MCF 10A (cell line): ENCODE measurements at regions of chr1 and their contacts with region 1.

Region 1: GRCh38 chr1:26035959-26036755 is 9.8 kb downstream of the SLC30A2 start:
- DNase-seq: peak; percentile 70
- H3K4me3 Mint-ChIP-seq: peak overlapping the region; percentile 94
- H3K27ac Mint-ChIP-seq: peak overlapping the region; percentile 61
- H3K4me1 Mint-ChIP-seq: peaks cover 11% of the 10 kb centered on the region
- H3K27me3 Mint-ChIP-seq: no peaks in the 10 kb centered on the region
- CTCF ChIP-seq: peak; percentile 96

Region 2: GRCh38 chr1:26097696-26098095 is 61.5 kb after region 1 on chr1:
- CTCF ChIA-PET with region 1: interaction called, 10 read pairs
- POLR2A ChIA-PET with region 1: no interaction called
- intact Hi-C with region 1: no loop called
- DNase-seq: no peak
- H3K4me3 Mint-ChIP-seq: no peak overlapping the region
- H3K27ac Mint-ChIP-seq: no peak overlapping the region
- H3K4me1 Mint-ChIP-seq: peaks cover 6% of the 10 kb centered on the region
- H3K27me3 Mint-ChIP-seq: peaks cover 5% of the 10 kb centered on the region
- CTCF ChIP-seq: no peak

Region 3: GRCh38 chr1:26164036-26164860 is 128.1 kb after region 1 on chr1:
- CTCF ChIA-PET with region 1: interaction called, 7 read pairs
- POLR2A ChIA-PET with region 1: interaction called, 3 read pairs
- intact Hi-C with region 1: loop called (anchors 2 kb)
- DNase-seq: no peak
- H3K4me3 Mint-ChIP-seq: peak overlapping the region; percentile 64
- H3K27ac Mint-ChIP-seq: no peak overlapping the region
- H3K4me1 Mint-ChIP-seq: no peaks in the 10 kb centered on the region
- H3K27me3 Mint-ChIP-seq: no peaks in the 10 kb centered on the region
- CTCF ChIP-seq: peak; percentile 78

Region 4: GRCh38 chr1:26516987-26517765 is 481.0 kb after region 1 on chr1:
- CTCF ChIA-PET with region 1: no interaction called
- POLR2A ChIA-PET with region 1: no interaction called
- intact Hi-C with region 1: no loop called
- DNase-seq: no peak
- H3K4me3 Mint-ChIP-seq: no peak overlapping the region
- H3K27ac Mint-ChIP-seq: no peak overlapping the region
- H3K4me1 Mint-ChIP-seq: peaks cover 8% of the 10 kb centered on the region
- H3K27me3 Mint-ChIP-seq: no peaks in the 10 kb centered on the region
- CTCF ChIP-seq: no peak